H1 (cell line): ENCODE measurements at regions of chr5 and their contacts with region 1.

Region 1: GRCh38 chr5:171418316-171418981 is 998 bp upstream of the FGF18 start:
- DNase-seq: peak; percentile 69 to 94
- H3K4me3 ChIP-seq: peak overlapping the region; percentile 35 to 73 (median 70)
- H3K27ac ChIP-seq: no peak overlapping the region
- H3K4me1 ChIP-seq: peaks cover 0 to 22% (median 13%) of the 10 kb centered on the region in 4 experiments; a peak in 6 of 7 replicates
- H3K27me3 ChIP-seq: peaks cover 22 to 37% (median 28%) of the 10 kb centered on the region in 4 experiments
- CTCF ChIP-seq: peak in 2 of 3 experiments; percentile 95 to 97; a peak in 3 of 4 replicates
- EP300 ChIP-seq: no peak
- POLR2A ChIP-seq: no peak
- RAD21 ChIP-seq: peak; percentile 94 to 98

Region 2: DNA sequence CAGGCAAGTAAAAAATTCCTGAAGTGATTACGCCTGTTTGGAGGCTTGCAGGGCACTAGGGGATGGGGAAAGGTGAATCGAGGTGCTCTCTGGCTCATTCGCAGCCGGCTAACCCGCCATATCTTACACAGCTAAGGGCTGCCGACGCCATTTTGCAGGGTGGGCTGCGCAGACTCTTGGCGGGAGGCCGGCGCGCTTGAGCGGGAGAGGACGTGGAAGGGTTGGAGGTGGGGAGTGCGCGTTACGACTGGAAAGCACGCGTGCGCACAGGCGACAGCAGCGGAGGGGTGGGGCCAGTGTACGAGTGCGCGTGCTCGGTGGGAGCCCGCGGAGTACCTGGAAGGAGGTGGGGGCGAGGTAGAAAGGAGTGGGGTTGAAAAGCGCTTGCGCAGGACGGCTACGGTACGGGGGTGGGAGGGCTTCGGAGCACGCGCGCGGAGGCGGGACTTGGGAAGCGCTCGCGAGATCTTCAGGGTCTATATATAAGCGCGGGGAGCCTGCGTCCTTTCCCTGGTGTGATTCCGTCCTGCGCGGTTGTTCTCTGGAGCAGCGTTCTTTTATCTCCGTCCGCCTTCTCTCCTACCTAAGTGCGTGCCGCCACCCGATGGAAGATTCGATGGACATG is 31.0 kb before region 1 on chr5 and contains the start of gene NPM1:
- CTCF ChIA-PET with region 1: interaction called, 8 read pairs
- POLR2A ChIA-PET with region 1: interaction called, 626 read pairs
- DNase-seq: peak; percentile 95 to 99
- H3K4me3 ChIP-seq: peak within 1 kb of the TSS; percentile 89 to 97 (median 92)
- H3K27ac ChIP-seq: peak within 1 kb of the TSS; percentile 96
- H3K4me1 ChIP-seq: peaks cover 3 to 13% (median 5%) of the 10 kb centered on the region in 4 experiments; a peak in 6 of 7 replicates
- H3K27me3 ChIP-seq: no peaks in the 10 kb centered on the region
- CTCF ChIP-seq: no peak
- EP300 ChIP-seq: peak in 1 of 2 experiments; percentile 30; a peak in 1 of 3 replicates
- POLR2A ChIP-seq: peak; percentile 97 to 98
- RAD21 ChIP-seq: no peak
- total RNA-seq, gene NPM1: 4,042 and 4,211 TPM in 2 replicates

Region 3: DNA sequence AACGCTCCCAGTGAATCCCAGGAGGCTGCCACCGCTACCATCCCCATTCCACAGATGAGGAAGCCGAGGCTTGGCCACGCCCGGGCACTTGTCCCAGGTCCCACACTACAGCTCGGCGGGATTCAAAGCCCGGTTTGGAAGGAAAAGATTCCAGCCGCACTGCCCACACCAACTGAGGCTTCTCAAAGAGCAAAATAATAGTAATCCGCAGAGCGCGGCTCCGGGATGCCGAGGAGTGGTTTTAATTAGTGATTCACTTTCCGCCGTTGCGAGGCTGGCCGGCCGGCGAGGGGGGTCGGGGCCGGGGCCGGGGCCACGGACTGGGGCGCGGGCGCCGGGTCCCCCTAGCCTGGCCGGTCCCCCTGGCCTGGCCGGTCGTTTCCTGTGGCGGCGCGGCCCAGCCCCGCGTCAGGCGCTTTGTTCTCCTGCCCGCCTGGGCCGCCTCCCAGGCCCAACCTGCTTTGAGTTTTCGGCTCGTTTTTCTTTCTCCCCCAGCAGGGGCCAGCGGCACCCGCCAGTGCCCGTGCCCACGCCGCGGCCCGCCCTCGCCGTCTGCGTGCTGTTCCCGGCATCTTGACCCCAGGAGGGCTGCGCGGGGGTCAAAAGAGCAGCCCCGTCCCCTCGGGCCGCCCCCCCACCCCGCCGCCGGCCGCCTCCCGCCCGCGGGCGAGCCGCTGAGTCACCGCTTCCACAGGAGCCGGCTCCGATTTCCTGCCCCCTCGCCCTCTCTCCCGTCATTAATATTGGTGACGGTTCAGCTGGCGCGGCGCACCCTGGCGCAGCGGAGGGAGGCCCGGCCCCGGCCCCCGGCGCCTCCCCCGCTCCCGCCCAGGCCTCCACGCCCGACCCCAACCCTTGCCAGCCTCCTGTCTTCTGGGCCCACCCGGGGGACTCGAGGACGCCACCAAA is 32.2 kb after region 1 on chr5:
- CTCF ChIA-PET with region 1: interaction called, 30 read pairs
- POLR2A ChIA-PET with region 1: interaction called, 4 read pairs
- DNase-seq: peak in 1 of 2 experiments; percentile 69
- H3K4me3 ChIP-seq: peak overlapping the region; percentile 5 to 58 (median 28); a peak in 6 of 8 replicates
- H3K27ac ChIP-seq: no peak overlapping the region
- H3K4me1 ChIP-seq: peaks cover 14 to 25% (median 20%) of the 10 kb centered on the region in 4 experiments
- H3K27me3 ChIP-seq: peaks cover 0 to 8% (median 6%) of the 10 kb centered on the region in 4 experiments; a peak in 4 of 7 replicates
- CTCF ChIP-seq: no peak
- EP300 ChIP-seq: no peak
- POLR2A ChIP-seq: 0 out of 3 replicates have a peak, but pooled peaks of 1 of the 2 experiments have one; percentile 18
- RAD21 ChIP-seq: no peak

Region 4: DNA sequence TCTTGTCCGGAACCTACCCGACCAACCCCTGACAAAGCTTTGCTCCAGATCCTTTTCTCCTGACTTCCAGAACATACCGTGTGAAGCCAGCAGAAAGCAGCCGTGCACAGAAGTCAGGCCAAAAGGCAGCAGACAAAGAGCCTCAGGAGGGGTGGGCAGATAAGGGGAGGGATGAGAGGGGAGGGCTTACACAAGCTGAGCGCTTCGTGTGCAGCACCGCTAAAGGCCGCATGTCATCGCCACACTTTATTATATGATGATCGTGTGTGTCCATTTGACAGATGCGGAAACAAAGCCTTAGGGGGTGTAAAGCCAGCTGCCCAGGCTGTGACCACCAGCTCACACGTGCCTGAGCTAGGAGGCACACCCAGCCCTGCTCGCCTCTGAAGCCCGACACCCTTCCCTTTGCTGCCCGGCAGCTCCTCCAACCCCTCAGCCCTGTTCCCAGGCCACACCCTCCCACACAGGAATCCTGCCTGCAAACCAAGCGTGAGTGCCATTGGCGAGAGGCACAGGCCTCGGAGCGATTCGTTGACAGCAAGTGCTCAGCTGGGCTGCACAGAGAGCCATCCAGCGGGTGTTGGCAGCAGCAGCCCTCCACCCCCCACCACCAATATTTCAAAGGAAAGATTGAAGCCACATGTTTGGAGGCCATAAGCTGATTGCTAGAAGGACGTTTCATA is 196.7 kb after region 1 on chr5:
- CTCF ChIA-PET with region 1: interaction called, 11 read pairs
- POLR2A ChIA-PET with region 1: interaction called, 4 read pairs
- DNase-seq: peak in 1 of 2 experiments; percentile 67
- H3K4me3 ChIP-seq: no peak overlapping the region
- H3K27ac ChIP-seq: no peak overlapping the region
- H3K4me1 ChIP-seq: peaks cover 0 to 14% (median 12%) of the 10 kb centered on the region in 4 experiments; a peak in 4 of 7 replicates
- H3K27me3 ChIP-seq: peaks cover 0 to 50% (median 34%) of the 10 kb centered on the region in 4 experiments; a peak in 6 of 7 replicates
- CTCF ChIP-seq: no peak
- EP300 ChIP-seq: no peak
- POLR2A ChIP-seq: no peak
- RAD21 ChIP-seq: no peak

Region 5: GRCh38 chr5:171667341-171668096 is 249.1 kb after region 1 on chr5:
- CTCF ChIA-PET with region 1: interaction called, 11 read pairs
- POLR2A ChIA-PET with region 1: no interaction called
- DNase-seq: peak; percentile 56 to 82
- H3K4me3 ChIP-seq: peak overlapping the region in 1 of 4 experiments; percentile 46; a peak in 2 of 8 replicates
- H3K27ac ChIP-seq: no peak overlapping the region
- H3K4me1 ChIP-seq: peaks cover 0 to 12% (median 6%) of the 10 kb centered on the region in 4 experiments; a peak in 6 of 7 replicates
- H3K27me3 ChIP-seq: peaks cover 0 to 2% (median 0%) of the 10 kb centered on the region in 4 experiments; a peak in 3 of 7 replicates
- CTCF ChIP-seq: no peak
- EP300 ChIP-seq: no peak
- POLR2A ChIP-seq: no peak
- RAD21 ChIP-seq: no peak

Region 6: DNA sequence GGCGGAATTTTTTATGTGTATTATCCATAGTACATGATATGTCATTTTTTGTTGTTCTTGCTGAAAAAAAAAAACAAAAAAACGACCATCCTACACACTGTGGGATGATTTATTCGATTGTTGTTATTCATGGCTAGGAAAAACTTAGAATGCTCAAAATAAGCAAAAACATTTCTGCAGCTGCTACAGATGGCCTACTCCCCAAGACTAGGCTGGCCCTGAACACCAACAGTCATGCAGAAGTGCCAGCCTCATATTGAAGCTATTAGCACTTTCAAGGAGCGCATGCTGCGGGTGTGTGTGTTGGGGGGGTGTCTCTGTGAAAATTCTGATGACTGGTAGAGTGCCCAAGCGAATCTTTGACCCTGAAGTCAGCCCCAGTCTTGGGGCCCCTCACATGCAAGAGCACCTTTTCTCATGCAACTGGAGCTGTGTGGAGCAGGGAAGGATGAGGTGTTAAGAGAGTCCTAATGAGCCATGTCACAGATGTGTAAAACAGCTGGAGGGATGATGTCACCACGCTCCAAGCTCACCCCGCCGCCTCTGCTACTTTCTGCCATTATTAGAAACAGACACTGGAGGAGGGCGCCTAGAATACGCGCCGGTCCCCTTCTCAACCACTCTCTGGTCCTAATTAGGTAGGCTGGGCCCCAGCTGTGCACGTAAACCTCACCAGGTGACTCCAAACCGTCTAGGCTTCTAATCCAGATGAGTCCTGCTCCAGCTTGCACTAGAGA is 306.2 kb after region 1 on chr5:
- CTCF ChIA-PET with region 1: no interaction called
- POLR2A ChIA-PET with region 1: no interaction called
- DNase-seq: peak in 1 of 2 experiments; percentile 39
- H3K4me3 ChIP-seq: no peak overlapping the region
- H3K27ac ChIP-seq: no peak overlapping the region
- H3K4me1 ChIP-seq: peaks cover 0 to 8% (median 3%) of the 10 kb centered on the region in 4 experiments; a peak in 3 of 7 replicates
- H3K27me3 ChIP-seq: no peaks in the 10 kb centered on the region
- CTCF ChIP-seq: no peak
- EP300 ChIP-seq: no peak
- POLR2A ChIP-seq: no peak
- RAD21 ChIP-seq: no peak

Region 7: DNA sequence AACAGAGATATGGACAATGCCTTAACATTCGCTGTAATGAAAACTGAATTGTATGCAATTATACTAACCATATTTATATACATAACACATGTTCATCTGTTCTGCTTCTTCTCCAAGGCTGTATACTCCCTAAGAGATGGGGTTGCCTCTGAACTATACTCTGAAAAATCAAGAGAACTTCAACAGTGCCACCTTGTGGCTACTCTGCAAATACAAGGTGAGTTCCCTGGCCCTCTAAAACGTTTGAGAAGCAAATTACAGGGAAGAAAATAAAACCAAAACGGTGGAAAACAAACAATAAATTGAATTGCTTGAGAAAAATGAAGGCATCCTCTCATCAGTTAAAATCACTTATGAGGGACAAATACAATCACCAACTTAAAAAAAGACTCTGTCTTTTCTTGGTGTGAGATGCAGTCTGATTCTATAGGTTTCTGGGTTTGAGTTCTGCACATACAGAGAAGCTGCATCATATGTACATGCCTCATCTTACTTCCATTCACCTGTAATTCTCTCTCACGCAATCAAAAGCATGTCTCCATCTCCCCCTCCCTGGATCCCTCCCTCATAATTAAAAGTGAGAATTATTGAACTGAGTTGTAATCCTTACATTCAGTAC is 489.4 kb after region 1 on chr5:
- CTCF ChIA-PET with region 1: interaction called, 10 read pairs
- POLR2A ChIA-PET with region 1: no interaction called
- DNase-seq: no peak
- H3K4me3 ChIP-seq: no peak overlapping the region
- H3K27ac ChIP-seq: no peak overlapping the region
- H3K4me1 ChIP-seq: peaks cover 0 to 4% (median 2%) of the 10 kb centered on the region in 4 experiments; a peak in 3 of 7 replicates
- H3K27me3 ChIP-seq: no peaks in the 10 kb centered on the region
- CTCF ChIP-seq: peak in 2 of 3 experiments; percentile 60 to 73; a peak in 3 of 4 replicates
- EP300 ChIP-seq: no peak
- POLR2A ChIP-seq: no peak
- RAD21 ChIP-seq: peak; percentile 67 to 74